BJ (cell line): ENCODE measurements at regions of chr11 and their contacts with region 1.

Region 1: GRCh38 chr11:12043959-12044819 is 35.8 kb upstream of the DKK3 start:
- DNase-seq: peak; percentile 98
- H3K4me3 ChIP-seq: no peak overlapping the region
- H3K27me3 ChIP-seq: no peaks in the 10 kb centered on the region
- CTCF ChIP-seq: peak; percentile 81

Region 2: DNA sequence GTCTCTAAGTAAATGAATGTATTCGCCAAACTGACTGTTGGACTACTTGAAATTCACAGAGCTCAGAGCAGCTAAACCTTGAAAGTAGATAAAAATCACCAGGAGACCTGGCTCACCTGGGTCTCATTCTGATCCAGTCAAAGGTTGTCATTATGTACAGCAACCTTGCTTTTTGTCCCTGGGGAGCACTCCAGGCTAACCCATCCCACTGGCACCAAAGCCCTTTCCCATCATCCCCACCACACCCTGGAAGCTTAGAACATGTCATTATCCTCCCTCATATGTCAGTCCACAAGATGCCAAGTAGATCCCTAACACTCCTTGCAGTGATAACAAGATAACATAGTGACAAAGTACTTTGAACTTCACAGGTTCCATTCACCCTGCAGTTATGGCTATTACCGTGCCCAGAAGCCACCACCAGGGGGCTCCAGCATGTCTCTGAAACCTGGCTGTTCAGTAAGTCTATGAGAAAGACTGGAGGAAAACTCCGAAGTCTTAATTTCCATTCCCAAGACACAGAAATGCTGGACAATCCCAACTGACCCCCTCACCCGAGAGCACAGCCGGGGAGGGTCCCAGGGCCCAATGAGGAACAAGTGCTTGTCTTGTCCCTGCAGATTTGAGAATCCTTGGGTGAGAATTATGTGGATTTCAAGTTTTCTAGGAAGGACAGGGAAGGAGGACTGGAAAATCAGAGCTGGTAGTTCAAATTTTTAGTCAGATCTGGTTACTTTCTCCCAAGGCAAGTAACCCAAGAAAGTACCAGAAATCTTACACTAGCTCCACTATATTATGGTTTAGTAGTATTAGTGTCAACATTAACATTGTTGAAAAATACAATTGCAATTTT is 245.4 kb before region 1 on chr11:
- CTCF ChIA-PET with region 1: interaction called, 55 read pairs
- POLR2A ChIA-PET with region 1: no interaction called
- DNase-seq: no peak
- H3K4me3 ChIP-seq: no peak overlapping the region
- H3K27me3 ChIP-seq: peaks cover 2% of the 10 kb centered on the region; the same call in 1 of the 2 replicates
- CTCF ChIP-seq: peak; percentile 94

Region 3: GRCh38 chr11:11977206-11977938 is 66.8 kb before region 1 on chr11:
- CTCF ChIA-PET with region 1: interaction called, 10 read pairs
- POLR2A ChIA-PET with region 1: no interaction called
- DNase-seq: peak; percentile 84
- H3K4me3 ChIP-seq: no peak overlapping the region
- H3K27me3 ChIP-seq: no peaks in the 10 kb centered on the region
- CTCF ChIP-seq: no peak

Region 4: DNA sequence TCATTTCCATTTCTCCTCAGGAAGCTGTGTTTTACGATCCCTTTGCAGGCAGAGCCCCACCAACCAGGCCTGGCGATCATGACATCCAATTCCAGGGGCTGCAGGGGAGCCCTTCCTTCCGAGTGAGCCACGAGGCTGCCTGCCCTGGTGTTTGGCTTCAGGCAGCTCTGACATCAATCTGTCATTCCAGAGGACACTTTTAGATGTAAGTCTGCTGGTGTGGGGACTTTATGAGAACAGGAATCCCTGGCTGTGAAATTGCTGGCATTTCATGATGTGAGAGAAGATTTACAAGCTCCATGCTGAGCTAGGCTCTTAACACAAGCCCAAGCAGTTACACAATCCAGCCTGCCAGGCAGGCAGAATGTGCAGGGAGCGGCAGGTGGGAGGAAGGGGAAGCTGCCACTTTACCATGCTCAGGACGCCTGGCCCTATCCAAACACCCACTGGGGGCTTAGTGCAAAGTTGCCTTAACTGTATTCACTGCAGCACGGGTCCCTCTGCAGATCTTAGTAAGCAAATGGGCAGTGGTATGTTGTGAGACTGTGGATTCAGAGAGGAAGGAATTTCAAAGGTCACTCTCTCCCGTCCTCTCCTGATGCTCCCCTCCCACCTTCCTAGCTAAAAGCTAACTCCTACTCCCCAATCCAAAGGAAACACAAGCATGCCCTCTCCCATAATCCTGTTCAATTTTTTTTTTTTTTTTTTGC is 22.8 kb after region 1 on chr11:
- CTCF ChIA-PET with region 1: interaction called, 21 read pairs
- POLR2A ChIA-PET with region 1: no interaction called
- DNase-seq: peak; percentile 95
- H3K4me3 ChIP-seq: no peak overlapping the region
- H3K27me3 ChIP-seq: no peaks in the 10 kb centered on the region
- CTCF ChIP-seq: no peak

Region 5: GRCh38 chr11:12087075-12088004 is 43.2 kb after region 1 on chr11:
- CTCF ChIA-PET with region 1: interaction called, 29 read pairs
- POLR2A ChIA-PET with region 1: no interaction called
- DNase-seq: no peak
- H3K4me3 ChIP-seq: peak overlapping the region; percentile 44
- H3K27me3 ChIP-seq: no peaks in the 10 kb centered on the region
- CTCF ChIP-seq: peak; percentile 41

Region 6: GRCh38 chr11:12235947-12236743 is 192.0 kb after region 1 on chr11:
- CTCF ChIA-PET with region 1: interaction called, 24 read pairs
- POLR2A ChIA-PET with region 1: no interaction called
- DNase-seq: no peak
- H3K4me3 ChIP-seq: no peak overlapping the region
- H3K27me3 ChIP-seq: no peaks in the 10 kb centered on the region
- CTCF ChIP-seq: peak; percentile 66